ENCODE measurements at regions of chr16 and their contacts with region 1.

Region 1: GRCh38 chr16:46689365-46690280 is at the start of gene ORC6:
- ATAC-seq: peak; percentile 77 to 85 (median 82)
- H3K4me3 ChIP-seq: peak within 1 kb of the TSS; percentile 70 to 88 (median 73)
- H3K27ac ChIP-seq: peak within 1 kb of the TSS; percentile 98
- H3K4me1 ChIP-seq: peaks cover 12 to 23% of the 10 kb centered on the region in 2 donors
- total RNA-seq, gene ORC6: 2.8 to 39.8 (median 5.9) TPM

Region 2: DNA sequence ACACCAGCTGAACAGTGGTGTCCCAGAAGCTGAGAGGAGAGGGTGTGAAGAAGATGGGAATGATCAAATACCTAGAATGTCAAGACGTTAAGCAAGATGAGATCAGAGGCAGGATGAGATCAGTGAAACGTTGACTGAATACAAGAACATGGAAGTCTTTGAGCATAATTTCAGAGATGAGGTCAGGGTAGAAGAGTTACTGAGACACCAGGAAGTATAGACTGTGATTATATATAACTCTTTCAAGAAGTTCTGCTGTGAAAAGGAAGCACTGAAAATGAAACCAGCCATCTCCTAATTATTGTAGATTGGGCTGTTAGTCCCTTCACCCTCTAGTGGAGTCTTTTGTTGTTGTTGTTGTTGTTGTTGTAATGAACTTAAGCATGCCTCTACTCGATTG is 77.5 kb before region 1 on chr16:
- in situ Hi-C with region 1: no loop called
- ATAC-seq: no peak
- H3K4me3 ChIP-seq: no peak overlapping the region
- H3K27ac ChIP-seq: no peak overlapping the region
- H3K4me1 ChIP-seq: no peaks in the 10 kb centered on the region

Region 3: GRCh38 chr16:46789499-46790414 is 100.1 kb after region 1 on chr16:
- in situ Hi-C with region 1: loop called in 1 of 9 experiments (anchors 25 kb)
- ATAC-seq: peak; percentile 94 to 99 (median 97)
- H3K4me3 ChIP-seq: peak overlapping the region; percentile 50 to 83 (median 64)
- H3K27ac ChIP-seq: peak overlapping the region; percentile 82 to 86
- H3K4me1 ChIP-seq: peaks cover 0 to 7% of the 10 kb centered on the region in 2 donors

Region 4: GRCh38 chr16:46801428-46802049 is 111.9 kb after region 1 on chr16:
- in situ Hi-C with region 1: loop called in 2 of 9 experiments (anchors 25 kb)
- ATAC-seq: peak in 3 of 8 experiments; percentile 33 to 59 (median 46)
- H3K4me3 ChIP-seq: no peak overlapping the region
- H3K27ac ChIP-seq: no peak overlapping the region
- H3K4me1 ChIP-seq: no peaks in the 10 kb centered on the region

Region 5: DNA sequence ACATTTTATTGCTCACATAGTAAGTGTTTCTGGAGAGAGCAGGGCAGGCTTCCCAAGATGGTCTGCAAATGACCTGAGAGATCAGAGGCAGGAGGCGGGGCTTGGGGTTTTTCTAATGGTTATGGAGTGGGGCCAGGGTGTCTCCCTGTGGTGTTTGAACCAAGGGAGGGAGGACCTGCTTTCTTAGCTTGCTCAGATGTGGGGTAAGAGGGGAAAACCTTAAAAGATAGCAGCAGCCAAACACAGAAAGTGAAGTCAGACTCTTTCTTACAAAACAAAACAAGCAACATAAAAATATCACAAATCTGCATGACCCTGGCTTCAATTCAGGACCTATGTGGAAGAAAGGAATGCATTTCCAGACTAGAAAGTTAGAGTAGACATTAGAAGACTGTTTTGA is 306.8 kb after region 1 on chr16:
- in situ Hi-C with region 1: no loop called
- ATAC-seq: peak in 1 of 8 experiments; percentile 38
- H3K4me3 ChIP-seq: no peak overlapping the region
- H3K27ac ChIP-seq: no peak overlapping the region
- H3K4me1 ChIP-seq: no peaks in the 10 kb centered on the region

Region 6: DNA sequence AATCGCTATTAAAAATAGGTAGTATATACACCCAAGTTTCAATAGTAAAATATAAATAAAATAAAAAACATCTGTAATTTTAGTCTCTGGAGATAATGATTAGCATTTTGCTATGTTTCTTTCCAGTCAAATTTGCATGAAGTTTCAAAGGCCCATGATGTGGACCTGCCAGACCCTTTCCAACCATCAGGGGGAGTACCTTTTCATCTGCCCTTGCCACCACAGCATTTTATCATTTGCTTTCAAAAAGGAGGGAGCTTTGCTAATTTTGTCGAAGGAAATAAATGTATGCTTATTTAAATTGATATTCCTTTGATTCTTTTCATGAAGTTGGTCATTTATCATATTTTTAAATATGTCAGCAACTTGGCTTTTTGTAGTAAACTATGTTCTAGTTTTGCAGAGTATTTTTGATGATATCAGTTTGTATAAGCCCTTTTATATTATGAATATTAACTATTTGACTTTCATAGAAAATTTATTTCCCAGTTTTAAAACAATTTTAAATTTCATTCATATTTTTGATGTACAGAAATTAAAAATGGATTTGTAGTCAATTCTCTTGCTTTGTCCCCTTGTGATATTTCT is 569.3 kb after region 1 on chr16:
- in situ Hi-C with region 1: no loop called
- ATAC-seq: no peak
- H3K4me3 ChIP-seq: no peak overlapping the region
- H3K27ac ChIP-seq: no peak overlapping the region
- H3K4me1 ChIP-seq: no peaks in the 10 kb centered on the region